CD4-positive, alpha-beta T cell (primary cell): ENCODE measurements at regions of chr7 and their contacts with region 1.

Region 1: DNA sequence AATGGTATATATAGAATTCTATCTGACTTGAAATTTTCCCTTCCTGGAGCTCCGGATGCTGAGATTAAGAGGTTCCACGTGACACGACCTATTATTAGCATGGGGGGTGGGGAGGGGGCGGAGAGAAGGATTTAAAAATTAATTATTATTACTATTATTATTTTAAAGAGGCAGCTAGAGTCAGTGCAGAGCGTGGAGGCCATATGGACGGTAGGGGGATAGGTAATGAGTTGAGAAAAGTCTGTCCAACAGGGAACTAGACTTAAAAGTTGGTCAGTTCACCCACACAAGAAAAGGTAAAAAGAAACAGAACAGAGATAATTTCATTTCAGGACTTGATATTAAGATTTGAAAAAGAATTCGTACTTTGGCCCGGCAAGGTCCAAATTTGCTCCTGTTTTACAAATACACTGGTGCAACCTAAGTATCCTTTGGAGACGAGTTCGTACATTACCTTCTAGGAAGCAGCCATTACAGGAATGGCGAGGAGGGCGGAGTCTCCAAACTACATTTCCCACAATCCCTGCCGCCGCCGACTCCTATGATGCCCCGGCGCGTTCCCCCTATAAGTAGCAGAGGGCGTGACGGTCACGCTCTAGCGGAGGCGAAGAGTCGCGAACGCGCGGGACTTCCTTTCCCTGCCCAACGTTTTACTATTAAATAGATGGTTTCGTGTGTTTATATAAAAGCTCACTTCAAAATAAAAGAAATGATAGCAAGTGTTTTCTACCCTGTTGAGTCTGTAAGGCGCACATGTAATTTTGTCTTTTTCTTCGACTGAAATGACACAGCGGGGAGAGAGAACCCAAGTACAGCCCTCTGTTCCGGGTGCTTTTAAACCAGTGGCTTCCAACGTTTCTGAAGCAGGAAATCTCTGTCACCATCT is at the start of gene SMIM30:
- DNase-seq: peak; percentile 79 to 94 (median 86)
- ATAC-seq: peak; percentile 100
- H3K4me3 ChIP-seq: peak within 1 kb of the TSS; percentile 72
- H3K4me3 Mint-ChIP-seq: peak within 1 kb of the TSS; percentile 94
- H3K27ac ChIP-seq: peak within 1 kb of the TSS; percentile 49 to 86
- H3K27ac Mint-ChIP-seq: peak within 1 kb of the TSS; percentile 88
- H3K4me1 ChIP-seq: peaks cover 4% of the 10 kb centered on the region
- H3K4me1 Mint-ChIP-seq: peaks cover 21% of the 10 kb centered on the region
- H3K27me3 ChIP-seq: no peaks in the 10 kb centered on the region
- H3K27me3 Mint-ChIP-seq: no peaks in the 10 kb centered on the region
- CTCF ChIP-seq: no peak
- total RNA-seq, gene SMIM30: 2.7 to 3.5 TPM

Region 2: DNA sequence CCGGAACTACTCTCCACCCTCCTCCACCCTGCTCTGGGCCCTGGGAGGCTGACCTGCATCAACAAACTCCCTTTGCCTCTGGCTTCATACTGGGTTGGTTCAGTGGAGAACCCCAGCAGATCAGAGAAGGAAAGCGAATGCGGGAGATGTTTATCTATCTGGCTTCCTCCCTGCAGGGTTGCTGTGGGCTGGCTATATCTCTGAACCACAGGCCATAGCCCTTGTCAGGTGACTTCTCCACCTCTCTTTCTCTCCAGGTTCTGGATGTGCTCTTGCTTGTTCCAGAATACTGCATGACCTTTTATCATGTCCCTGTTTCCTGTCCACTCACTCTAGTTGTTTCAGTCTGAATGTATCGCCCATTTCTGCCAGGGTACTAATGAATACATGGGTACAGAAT is 719.8 kb before region 1 on chr7:
- CTCF ChIA-PET with region 1: no interaction called
- POLR2A ChIA-PET with region 1: no interaction called
- intact Hi-C with region 1: loop called in 1 of 2 experiments (anchors 10 kb)
- DNase-seq: peak in 4 of 14 experiments; percentile 21 to 57 (median 54)
- ATAC-seq: peak; percentile 80
- H3K4me3 ChIP-seq: no peak overlapping the region
- H3K4me3 Mint-ChIP-seq: peak overlapping the region; percentile 46
- H3K27ac ChIP-seq: peak overlapping the region in 1 of 2 donors; percentile 10
- H3K27ac Mint-ChIP-seq: peak overlapping the region; percentile 12
- H3K4me1 ChIP-seq: peaks cover 12% of the 10 kb centered on the region
- H3K4me1 Mint-ChIP-seq: peaks cover 36% of the 10 kb centered on the region
- H3K27me3 ChIP-seq: no peaks in the 10 kb centered on the region
- H3K27me3 Mint-ChIP-seq: no peaks in the 10 kb centered on the region
- CTCF ChIP-seq: no peak

Region 3: GRCh38 chr7:112789817-112790585 is 328.3 kb before region 1 on chr7 and contains the start of gene TMEM168:
- CTCF ChIA-PET with region 1: no interaction called
- POLR2A ChIA-PET with region 1: no interaction called
- intact Hi-C with region 1: loop called (anchors 2 to 5 kb)
- DNase-seq: peak; percentile 80 to 92 (median 84)
- ATAC-seq: peak; percentile 91
- H3K4me3 ChIP-seq: peak within 1 kb of the TSS; percentile 95
- H3K4me3 Mint-ChIP-seq: peak within 1 kb of the TSS; percentile 92
- H3K27ac ChIP-seq: peak within 1 kb of the TSS; percentile 65 to 79
- H3K27ac Mint-ChIP-seq: peak within 1 kb of the TSS; percentile 77
- H3K4me1 ChIP-seq: peaks cover 22% of the 10 kb centered on the region
- H3K4me1 Mint-ChIP-seq: peaks cover 46% of the 10 kb centered on the region
- H3K27me3 ChIP-seq: no peaks in the 10 kb centered on the region
- H3K27me3 Mint-ChIP-seq: no peaks in the 10 kb centered on the region
- CTCF ChIP-seq: no peak
- total RNA-seq, gene TMEM168: 11.5 to 11.9 TPM

Region 4: DNA sequence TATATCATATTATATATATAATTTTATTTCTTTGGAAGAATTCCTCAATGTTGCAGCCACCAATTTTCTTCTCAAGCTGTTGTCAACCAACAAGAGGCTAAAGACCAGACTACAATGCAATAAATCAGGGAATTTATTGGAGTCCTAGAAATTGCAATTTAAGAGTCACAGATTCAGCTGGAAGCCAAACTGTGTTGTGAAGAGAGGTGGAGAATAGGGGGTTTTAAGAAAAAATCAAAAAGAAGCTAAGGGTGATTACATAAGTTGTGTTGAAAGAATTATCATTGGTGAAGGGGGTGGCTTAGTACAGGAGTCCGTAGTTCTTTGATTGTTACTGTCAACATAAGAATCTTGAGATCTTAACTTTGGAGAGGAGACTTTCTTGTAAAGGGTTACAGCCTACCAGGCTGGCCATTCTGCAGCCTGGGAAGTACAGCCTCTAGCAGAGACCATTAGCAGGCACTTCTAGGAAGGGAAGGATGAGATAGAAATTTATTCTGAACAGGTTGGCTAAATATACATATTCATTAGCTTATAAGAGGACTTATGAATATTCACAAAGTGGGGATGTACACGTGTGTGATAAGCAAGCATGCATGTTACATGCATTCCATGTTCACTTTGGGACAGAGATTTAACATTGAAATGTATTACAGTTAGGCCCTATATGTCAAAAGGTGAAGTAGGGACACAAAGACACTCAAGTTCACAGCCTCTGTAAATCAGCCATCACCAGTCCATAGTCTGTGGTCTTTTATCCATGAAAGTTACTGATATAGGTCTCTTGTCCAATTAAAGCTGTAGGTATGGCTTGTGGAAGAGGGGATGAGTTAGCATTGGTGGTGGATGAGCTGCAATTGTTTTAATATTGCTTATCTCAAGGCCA is 319.8 kb before region 1 on chr7:
- CTCF ChIA-PET with region 1: no interaction called
- POLR2A ChIA-PET with region 1: no interaction called
- intact Hi-C with region 1: loop called (anchors 2 to 5 kb)
- DNase-seq: no peak
- ATAC-seq: peak; percentile 38
- H3K4me3 ChIP-seq: no peak overlapping the region
- H3K4me3 Mint-ChIP-seq: no peak overlapping the region
- H3K27ac ChIP-seq: no peak overlapping the region
- H3K27ac Mint-ChIP-seq: no peak overlapping the region
- H3K4me1 ChIP-seq: no peaks in the 10 kb centered on the region
- H3K4me1 Mint-ChIP-seq: no peaks in the 10 kb centered on the region
- H3K27me3 ChIP-seq: no peaks in the 10 kb centered on the region
- H3K27me3 Mint-ChIP-seq: no peaks in the 10 kb centered on the region
- CTCF ChIP-seq: no peak

Region 5: GRCh38 chr7:112939574-112940314 is 178.6 kb before region 1 on chr7:
- CTCF ChIA-PET with region 1: no interaction called
- POLR2A ChIA-PET with region 1: interaction called, 3 read pairs
- intact Hi-C with region 1: loop called (anchors 2 to 5 kb)
- DNase-seq: peak; percentile 98 to 100 (median 99)
- ATAC-seq: peak; percentile 95
- H3K4me3 ChIP-seq: peak overlapping the region; percentile 83
- H3K4me3 Mint-ChIP-seq: peak overlapping the region; percentile 98
- H3K27ac ChIP-seq: peak overlapping the region; percentile 53 to 66
- H3K27ac Mint-ChIP-seq: peak overlapping the region; percentile 88
- H3K4me1 ChIP-seq: peaks cover 18% of the 10 kb centered on the region
- H3K4me1 Mint-ChIP-seq: peaks cover 53% of the 10 kb centered on the region
- H3K27me3 ChIP-seq: no peaks in the 10 kb centered on the region
- H3K27me3 Mint-ChIP-seq: no peaks in the 10 kb centered on the region
- CTCF ChIP-seq: no peak